HEK293T (cell line): ENCODE measurements at regions of chr3 and their contacts with region 1.

Region 1: GRCh38 chr3:9731206-9732079 is at the start of gene BRPF1:
- DNase-seq: peak; percentile 100

Region 2: DNA sequence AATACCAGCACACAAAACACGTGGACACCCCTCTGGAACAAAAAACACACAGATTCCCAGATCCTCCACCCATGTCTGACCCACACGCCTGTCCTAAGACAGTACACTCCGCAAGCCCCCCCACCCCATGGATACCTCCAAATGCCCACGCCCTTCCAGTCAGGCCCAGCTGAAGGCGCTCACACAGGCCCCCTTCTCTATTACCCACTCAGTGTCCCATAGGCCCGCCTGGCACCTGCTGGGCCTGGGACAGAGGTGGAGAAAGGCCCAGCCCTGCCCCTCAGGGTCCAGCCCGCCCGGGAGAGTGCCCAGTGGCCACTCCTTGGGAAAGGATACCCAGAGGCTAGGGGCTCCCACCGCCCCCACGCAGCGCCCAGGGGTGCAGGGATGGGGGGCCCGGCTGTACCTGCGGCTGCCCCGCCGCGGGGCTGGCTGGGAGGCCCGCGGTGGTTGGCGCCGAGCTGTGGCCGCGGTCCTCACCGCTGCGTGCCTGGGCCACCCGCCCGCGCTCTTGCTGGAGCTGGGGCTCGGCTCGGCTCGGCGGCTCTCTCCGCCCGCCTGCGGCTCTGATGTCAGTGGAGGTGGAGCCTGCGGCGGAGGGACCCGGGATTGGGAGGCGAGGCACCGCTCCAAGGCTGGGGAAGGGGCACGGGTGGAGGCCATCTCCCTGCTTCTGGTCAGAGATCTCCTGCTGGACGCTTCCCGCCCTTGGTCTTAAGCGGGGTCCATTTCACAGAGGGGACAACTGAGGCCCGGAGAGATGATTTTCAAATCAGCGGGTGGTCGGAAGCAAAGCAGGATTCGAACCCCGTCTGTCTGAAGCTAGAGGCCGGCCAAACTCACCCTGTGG is 38.2 kb after region 1 on chr3 and contains the start of gene CAMK1:
- CTCF ChIA-PET with region 1: no interaction called
- POLR2A ChIA-PET with region 1: interaction called, 10 read pairs
- DNase-seq: peak; percentile 88